CD4-positive, alpha-beta memory T cell (primary cell): ENCODE measurements at regions of chr4 and their contacts with region 1.

Region 1: DNA sequence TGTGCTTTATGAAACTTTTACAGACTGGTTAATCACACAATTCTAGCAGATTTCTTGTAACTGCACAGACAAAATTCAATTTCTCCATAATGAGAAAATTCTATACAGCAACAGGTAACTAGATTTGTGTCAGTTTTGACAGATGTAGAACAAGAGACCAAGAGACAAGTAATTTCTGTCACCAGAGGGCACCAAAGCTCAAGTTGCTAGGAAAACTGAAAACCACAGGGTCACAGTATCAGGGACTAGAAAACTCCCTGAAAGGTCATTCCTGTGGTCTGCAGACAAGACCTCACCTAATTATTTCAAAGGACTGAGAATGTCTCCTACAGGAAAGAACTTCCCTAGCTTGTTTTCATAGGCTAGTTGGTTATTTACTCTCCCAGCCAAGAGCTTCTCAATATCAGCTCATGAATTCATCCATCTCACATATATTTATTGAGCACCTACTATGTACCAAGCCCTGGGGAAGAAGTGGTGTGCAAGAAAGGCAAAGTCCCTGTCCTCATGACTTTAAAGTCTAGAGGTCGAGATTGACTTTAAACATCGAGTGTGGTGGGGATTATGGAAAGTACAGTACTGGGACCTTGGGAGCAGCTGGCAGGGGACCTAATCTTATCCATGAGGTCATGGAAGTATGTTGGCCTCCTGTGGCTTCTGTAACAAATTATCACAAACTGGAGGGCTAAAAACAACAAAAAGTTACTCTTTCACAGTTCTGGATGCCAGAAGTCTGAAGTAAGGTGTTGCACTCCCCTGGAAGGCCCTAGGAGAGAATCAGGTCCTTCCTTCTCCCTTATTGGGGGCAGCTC is 47.8 kb upstream of the SETD7 start:
- DNase-seq: peak in 4 of 5 donors; percentile 22 to 36 (median 34)
- H3K4me3 ChIP-seq: no peak overlapping the region
- H3K4me3 Mint-ChIP-seq: no peak overlapping the region
- H3K27ac ChIP-seq: no peak overlapping the region
- H3K27ac Mint-ChIP-seq: no peak overlapping the region
- H3K4me1 ChIP-seq: peaks cover 4% of the 10 kb centered on the region
- H3K4me1 Mint-ChIP-seq: peaks cover 13 to 15% (median 14%) of the 10 kb centered on the region in 4 donors
- H3K27me3 ChIP-seq: no peaks in the 10 kb centered on the region
- H3K27me3 Mint-ChIP-seq: peaks cover 4 to 6% of the 10 kb centered on the region in 2 donors

Region 2: GRCh38 chr4:139619644-139620043 is 15.9 kb after region 1 on chr4:
- CTCF ChIA-PET with region 1: interaction called, 21 read pairs
- POLR2A ChIA-PET with region 1: no interaction called
- intact Hi-C with region 1: no loop called
- DNase-seq: peak in 1 of 5 donors; percentile 4
- H3K4me3 ChIP-seq: no peak overlapping the region
- H3K4me3 Mint-ChIP-seq: no peak overlapping the region
- H3K27ac ChIP-seq: no peak overlapping the region
- H3K27ac Mint-ChIP-seq: no peak overlapping the region
- H3K4me1 ChIP-seq: no peaks in the 10 kb centered on the region
- H3K4me1 Mint-ChIP-seq: peaks cover 0 to 4% (median 0%) of the 10 kb centered on the region in 4 donors
- H3K27me3 ChIP-seq: no peaks in the 10 kb centered on the region
- H3K27me3 Mint-ChIP-seq: peaks cover 0 to 4% of the 10 kb centered on the region in 2 donors

Region 3: GRCh38 chr4:139642364-139642763 is 38.6 kb after region 1 on chr4:
- CTCF ChIA-PET with region 1: interaction called, 12 read pairs
- POLR2A ChIA-PET with region 1: no interaction called
- intact Hi-C with region 1: no loop called
- DNase-seq: no peak
- H3K4me3 ChIP-seq: no peak overlapping the region
- H3K4me3 Mint-ChIP-seq: no peak overlapping the region
- H3K27ac ChIP-seq: no peak overlapping the region
- H3K27ac Mint-ChIP-seq: no peak overlapping the region
- H3K4me1 ChIP-seq: no peaks in the 10 kb centered on the region
- H3K4me1 Mint-ChIP-seq: no peaks in the 10 kb centered on the region
- H3K27me3 ChIP-seq: no peaks in the 10 kb centered on the region
- H3K27me3 Mint-ChIP-seq: peaks cover 3% of the 10 kb centered on the region in 2 donors

Region 4: DNA sequence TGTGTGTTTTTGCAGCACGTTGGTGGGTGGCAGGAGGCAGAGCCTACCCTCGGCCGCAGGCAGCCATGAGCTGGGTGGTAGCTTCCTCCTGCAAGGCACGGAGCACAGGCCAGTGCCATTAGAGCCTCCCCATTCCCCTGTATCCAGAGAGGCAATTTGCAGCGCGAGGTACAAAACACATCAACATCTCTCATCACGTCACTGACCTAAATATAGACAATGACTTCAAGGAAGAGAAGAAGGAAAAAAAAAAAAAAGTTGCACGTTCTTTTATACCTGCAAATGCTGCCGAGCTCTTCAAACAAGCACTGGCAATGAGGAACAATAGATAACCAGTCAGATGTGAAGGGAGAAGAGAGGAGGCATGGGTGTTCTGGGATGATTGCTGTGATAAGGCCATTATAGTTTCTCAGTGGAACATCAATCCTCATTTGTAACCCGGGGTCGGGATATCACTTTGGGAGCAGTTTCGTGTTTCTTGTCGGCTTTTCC is 221.8 kb after region 1 on chr4:
- CTCF ChIA-PET with region 1: no interaction called
- POLR2A ChIA-PET with region 1: no interaction called
- intact Hi-C with region 1: no loop called
- DNase-seq: no peak
- H3K4me3 ChIP-seq: no peak overlapping the region
- H3K4me3 Mint-ChIP-seq: no peak overlapping the region
- H3K27ac ChIP-seq: no peak overlapping the region
- H3K27ac Mint-ChIP-seq: no peak overlapping the region
- H3K4me1 ChIP-seq: no peaks in the 10 kb centered on the region
- H3K4me1 Mint-ChIP-seq: peaks cover 0 to 1% (median 0%) of the 10 kb centered on the region in 4 donors
- H3K27me3 ChIP-seq: no peaks in the 10 kb centered on the region
- H3K27me3 Mint-ChIP-seq: no peaks in the 10 kb centered on the region

Region 5: DNA sequence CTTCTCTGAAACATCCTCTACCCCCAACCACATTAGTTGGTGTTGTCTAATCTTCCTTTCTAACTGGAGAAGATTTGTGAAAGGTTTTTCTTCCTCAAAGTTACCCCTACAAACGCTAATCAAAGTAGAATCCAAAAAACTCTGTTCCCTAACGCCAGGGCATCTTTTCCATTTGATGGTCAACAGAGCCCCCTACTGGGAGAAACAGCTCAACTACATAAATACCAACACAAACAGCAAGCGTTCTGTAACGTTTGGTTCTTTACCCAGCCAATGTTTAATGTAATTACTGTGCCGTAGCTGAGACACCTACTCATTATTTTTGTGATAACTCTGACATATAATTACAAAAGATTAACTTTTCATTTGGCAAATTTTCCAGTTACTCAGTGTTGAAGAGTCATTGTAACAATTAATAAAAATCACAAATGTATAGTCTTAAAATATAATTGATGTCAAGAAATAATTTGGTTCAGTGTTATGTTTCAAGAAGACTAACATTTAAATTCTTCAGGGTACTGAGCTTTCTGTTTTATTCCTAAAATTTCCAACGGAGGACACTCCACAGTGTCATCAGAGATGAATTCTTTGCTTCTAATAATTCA is 1247.4 kb after region 1 on chr4:
- CTCF ChIA-PET with region 1: no interaction called
- POLR2A ChIA-PET with region 1: no interaction called
- intact Hi-C with region 1: loop called (anchors 5 kb)
- DNase-seq: peak in 4 of 5 donors; percentile 2 to 14 (median 5)
- H3K4me3 ChIP-seq: no peak overlapping the region
- H3K4me3 Mint-ChIP-seq: no peak overlapping the region
- H3K27ac ChIP-seq: no peak overlapping the region
- H3K27ac Mint-ChIP-seq: no peak overlapping the region
- H3K4me1 ChIP-seq: no peaks in the 10 kb centered on the region
- H3K4me1 Mint-ChIP-seq: no peaks in the 10 kb centered on the region
- H3K27me3 ChIP-seq: no peaks in the 10 kb centered on the region
- H3K27me3 Mint-ChIP-seq: peaks cover 7 to 20% of the 10 kb centered on the region in 2 donors